Upper lobe of right lung (tissue), 1 donor: ENCODE measurements at regions of chr20 and their contacts with region 1.

Region 1: GRCh38 chr20:4171538-4172116 is 156.3 kb upstream of the RNF24 start:
- DNase-seq: no peak
- ATAC-seq: no peak
- H3K4me3 ChIP-seq: peak overlapping the region; percentile 55
- H3K27ac ChIP-seq: no peak overlapping the region
- H3K4me1 ChIP-seq: peaks cover 5% of the 10 kb centered on the region
- H3K27me3 ChIP-seq: no peaks in the 10 kb centered on the region
- CTCF ChIP-seq: no peak

Region 2: DNA sequence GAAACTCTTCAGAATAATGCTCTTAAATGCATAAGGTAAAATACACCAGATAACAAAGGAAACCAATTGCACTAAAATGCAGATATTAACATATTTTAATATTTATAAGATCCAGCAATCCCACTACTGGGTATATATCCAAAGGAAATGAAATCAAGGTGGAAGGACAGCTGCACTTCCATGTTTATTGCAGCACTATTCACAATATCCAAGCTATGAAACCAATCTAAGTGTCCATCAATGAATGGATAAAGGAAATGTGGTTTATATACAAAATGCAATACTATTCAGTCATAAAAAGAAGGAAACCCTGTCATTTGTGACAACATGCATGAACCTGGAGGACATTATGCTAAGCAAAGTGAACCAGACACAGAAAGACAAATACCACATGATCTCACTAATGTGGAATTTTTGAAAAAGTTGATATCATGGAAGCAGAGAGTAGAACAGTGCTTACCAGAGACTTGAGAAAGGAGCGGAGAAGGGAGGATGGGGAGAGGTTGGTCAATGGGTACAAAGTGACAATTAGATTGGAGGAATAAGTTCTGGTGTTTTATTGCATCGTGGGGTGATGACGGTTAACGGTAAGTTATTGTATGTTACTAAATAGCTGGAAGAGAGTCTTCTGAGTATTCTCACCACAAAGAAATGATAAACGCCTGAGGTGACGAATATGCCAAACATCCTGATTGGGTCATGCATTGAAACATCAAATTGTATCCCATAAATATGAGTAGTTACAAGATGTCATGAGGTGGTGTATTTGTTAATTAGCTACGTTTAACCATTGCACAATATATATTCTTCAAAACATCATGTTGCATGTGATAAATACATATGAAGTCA is 118.3 kb before region 1 on chr20:
- intact Hi-C with region 1: no loop called
- DNase-seq: no peak
- ATAC-seq: no peak
- H3K4me3 ChIP-seq: no peak overlapping the region
- H3K27ac ChIP-seq: no peak overlapping the region
- H3K4me1 ChIP-seq: no peaks in the 10 kb centered on the region
- H3K27me3 ChIP-seq: no peaks in the 10 kb centered on the region
- CTCF ChIP-seq: no peak

Region 3: DNA sequence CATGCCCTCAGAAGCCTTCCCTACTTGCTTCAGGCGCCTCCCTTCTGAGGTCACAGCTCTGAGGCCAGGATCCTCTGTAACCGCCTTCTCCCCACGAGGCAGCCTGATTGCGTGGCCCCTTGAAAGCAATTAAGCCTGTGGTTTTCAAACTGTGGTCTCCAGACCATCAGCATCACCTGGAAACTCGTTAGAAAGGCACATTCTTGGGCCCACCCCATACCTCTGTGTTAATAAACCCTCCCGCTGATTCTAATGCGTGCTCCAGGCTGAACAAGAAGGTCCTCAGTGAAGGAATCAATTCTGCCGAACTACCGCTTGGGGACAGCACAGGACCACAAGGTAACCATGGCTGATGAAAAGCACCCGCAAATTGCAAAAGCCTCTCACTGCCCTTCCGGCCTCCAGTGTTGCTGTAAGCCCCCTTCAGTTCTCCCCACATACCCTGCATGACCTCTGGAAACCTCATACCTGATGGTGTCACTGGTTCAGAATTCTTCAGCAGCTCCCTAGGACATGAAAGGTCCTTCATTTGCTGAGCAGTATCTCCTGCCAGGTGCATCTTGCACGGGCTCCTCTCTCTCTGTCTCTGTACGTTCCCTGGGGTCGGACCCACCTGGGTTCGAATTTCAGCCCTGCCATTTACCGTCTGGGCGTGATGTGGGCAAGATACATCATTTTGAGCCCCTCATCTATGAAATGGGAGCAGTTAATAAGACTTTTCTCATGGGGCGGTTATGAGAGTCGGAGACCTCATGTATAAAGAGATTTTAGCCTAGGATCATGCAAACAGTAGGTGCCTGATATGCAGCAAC is 62.9 kb before region 1 on chr20:
- intact Hi-C with region 1: loop called (anchors 2 kb)
- DNase-seq: peak; percentile 64
- ATAC-seq: peak; percentile 87
- H3K4me3 ChIP-seq: no peak overlapping the region
- H3K27ac ChIP-seq: no peak overlapping the region
- H3K4me1 ChIP-seq: peaks cover 10% of the 10 kb centered on the region
- H3K27me3 ChIP-seq: no peaks in the 10 kb centered on the region
- CTCF ChIP-seq: peak; percentile 94